Natural killer cell (primary cell): ENCODE measurements at regions of chr2 and their contacts with region 1.

Region 1: DNA sequence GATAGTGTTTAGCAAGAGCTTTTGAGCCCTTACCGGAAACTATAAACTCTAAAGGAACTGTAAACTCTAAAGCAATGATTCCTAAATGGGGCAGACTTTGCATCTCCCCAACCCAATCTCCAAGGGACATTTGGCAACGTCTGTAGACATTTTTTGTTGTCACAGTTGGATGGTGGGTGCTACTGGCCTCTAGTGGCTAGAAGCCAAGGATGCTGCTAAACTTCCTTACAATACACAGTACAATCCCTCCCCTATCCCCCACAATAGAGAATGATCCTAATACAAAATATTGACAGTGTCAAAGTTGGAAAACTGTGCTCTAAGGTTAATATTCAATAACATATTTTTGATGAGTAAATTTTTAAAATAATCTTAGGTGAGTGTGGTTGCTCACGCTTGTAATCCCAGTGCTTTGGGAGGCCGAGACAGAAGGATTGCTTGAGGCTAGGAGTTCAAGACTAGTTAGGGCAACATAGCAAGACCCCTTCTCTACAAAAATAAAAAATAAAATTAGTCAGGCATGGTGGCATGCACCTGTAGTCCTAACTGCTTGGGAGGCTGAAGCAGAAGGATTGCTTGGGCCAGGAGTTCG is 66.7 kb downstream of the PTPN4 start:
- DNase-seq: peak in 1 of 2 donors; percentile 72
- ATAC-seq: peak; percentile 70 to 84 (median 76)
- H3K4me3 ChIP-seq: no peak overlapping the region
- H3K4me3 Mint-ChIP-seq: no peak overlapping the region
- H3K27ac ChIP-seq: no peak overlapping the region
- H3K27ac Mint-ChIP-seq: no peak overlapping the region
- H3K4me1 ChIP-seq: no peaks in the 10 kb centered on the region
- H3K4me1 Mint-ChIP-seq: peaks cover 37 to 59% of the 10 kb centered on the region in 2 donors
- H3K27me3 ChIP-seq: no peaks in the 10 kb centered on the region
- H3K27me3 Mint-ChIP-seq: no peaks in the 10 kb centered on the region
- CTCF ChIP-seq: peak; percentile 74

Region 2: DNA sequence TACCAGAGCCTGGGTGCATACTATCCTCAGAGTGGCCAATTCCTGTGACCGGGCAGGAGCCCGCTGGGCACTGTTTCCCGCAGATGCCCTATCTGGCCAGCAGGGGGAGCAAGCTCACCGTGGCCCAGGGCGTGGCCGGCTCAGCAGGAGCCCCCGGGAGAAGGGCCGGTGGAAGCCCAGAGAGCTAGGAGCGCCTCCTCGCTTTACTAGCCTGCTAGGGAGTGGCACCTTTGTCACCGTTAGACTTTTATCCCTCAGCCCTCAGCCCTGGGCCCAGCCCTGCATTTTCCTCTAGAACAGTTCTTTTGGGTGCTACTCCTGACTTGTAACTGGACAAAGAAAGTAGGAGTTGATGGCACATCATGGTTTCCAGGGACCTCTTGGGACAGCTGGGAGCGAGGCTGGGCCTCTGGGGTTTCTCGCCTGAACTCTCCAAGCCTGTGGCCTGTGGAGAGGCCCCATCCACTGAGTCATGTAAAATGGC is 123.5 kb before region 1 on chr2:
- intact Hi-C with region 1: loop called (anchors 1 kb)
- DNase-seq: peak; percentile 58 to 83
- ATAC-seq: peak; percentile 90 to 98 (median 95)
- H3K4me3 ChIP-seq: no peak overlapping the region
- H3K4me3 Mint-ChIP-seq: no peak overlapping the region
- H3K27ac ChIP-seq: no peak overlapping the region
- H3K27ac Mint-ChIP-seq: no peak overlapping the region
- H3K4me1 ChIP-seq: peaks cover 9% of the 10 kb centered on the region
- H3K4me1 Mint-ChIP-seq: peaks cover 0 to 6% of the 10 kb centered on the region in 2 donors
- H3K27me3 ChIP-seq: no peaks in the 10 kb centered on the region
- H3K27me3 Mint-ChIP-seq: peaks cover 6 to 12% of the 10 kb centered on the region in 2 donors
- CTCF ChIP-seq: peak; percentile 95

Region 3: GRCh38 chr2:119753041-119753929 is 73.2 kb before region 1 on chr2:
- intact Hi-C with region 1: loop called (anchors 1 kb)
- DNase-seq: peak in 1 of 2 donors; percentile 80
- ATAC-seq: peak; percentile 66 to 89 (median 86)
- H3K4me3 ChIP-seq: no peak overlapping the region
- H3K4me3 Mint-ChIP-seq: no peak overlapping the region
- H3K27ac ChIP-seq: no peak overlapping the region
- H3K27ac Mint-ChIP-seq: no peak overlapping the region
- H3K4me1 ChIP-seq: no peaks in the 10 kb centered on the region
- H3K4me1 Mint-ChIP-seq: peaks cover 5 to 7% of the 10 kb centered on the region in 2 donors
- H3K27me3 ChIP-seq: no peaks in the 10 kb centered on the region
- H3K27me3 Mint-ChIP-seq: no peaks in the 10 kb centered on the region
- CTCF ChIP-seq: peak; percentile 73

Region 4: DNA sequence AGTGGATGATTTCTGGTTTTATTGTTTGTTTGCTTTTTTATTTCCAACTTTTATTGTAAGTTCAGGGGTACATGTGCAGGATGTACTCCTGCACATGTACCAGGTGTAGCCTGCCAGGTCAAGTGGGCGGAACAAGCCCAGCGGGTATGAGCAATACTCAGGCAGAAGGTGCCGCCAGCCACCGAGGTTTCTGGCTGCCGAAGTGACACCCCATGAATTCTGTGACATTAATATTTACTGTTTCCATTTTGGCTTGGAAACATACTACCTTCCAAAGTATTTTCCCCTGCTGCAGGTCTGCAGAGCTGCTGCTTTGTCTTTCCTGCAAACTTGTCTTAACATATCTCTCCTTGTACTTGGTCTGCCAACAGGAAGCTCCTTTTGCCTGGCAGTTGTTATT is 11.7 kb after region 1 on chr2:
- intact Hi-C with region 1: no loop called
- DNase-seq: no peak
- ATAC-seq: no peak
- H3K4me3 ChIP-seq: no peak overlapping the region
- H3K4me3 Mint-ChIP-seq: no peak overlapping the region
- H3K27ac ChIP-seq: no peak overlapping the region
- H3K27ac Mint-ChIP-seq: peak overlapping the region; percentile 29 to 71
- H3K4me1 ChIP-seq: peaks cover 4% of the 10 kb centered on the region
- H3K4me1 Mint-ChIP-seq: peaks cover 49 to 61% of the 10 kb centered on the region in 2 donors
- H3K27me3 ChIP-seq: no peaks in the 10 kb centered on the region
- H3K27me3 Mint-ChIP-seq: no peaks in the 10 kb centered on the region
- CTCF ChIP-seq: no peak